ENCODE measurements at regions of chr2 and their contacts with region 1.

Region 1: GRCh38 chr2:150466741-150467620 is 20.5 kb downstream of the RND3 start:
- DNase-seq: peak; percentile 59
- H3K4me3 ChIP-seq: no peak overlapping the region
- H3K27ac ChIP-seq: peak overlapping the region; percentile 96
- H3K4me1 ChIP-seq: peaks cover 90% of the 10 kb centered on the region
- H3K27me3 ChIP-seq: no peaks in the 10 kb centered on the region
- CTCF ChIP-seq: no peak
- POLR2A ChIP-seq: peak; percentile 60

Region 2: DNA sequence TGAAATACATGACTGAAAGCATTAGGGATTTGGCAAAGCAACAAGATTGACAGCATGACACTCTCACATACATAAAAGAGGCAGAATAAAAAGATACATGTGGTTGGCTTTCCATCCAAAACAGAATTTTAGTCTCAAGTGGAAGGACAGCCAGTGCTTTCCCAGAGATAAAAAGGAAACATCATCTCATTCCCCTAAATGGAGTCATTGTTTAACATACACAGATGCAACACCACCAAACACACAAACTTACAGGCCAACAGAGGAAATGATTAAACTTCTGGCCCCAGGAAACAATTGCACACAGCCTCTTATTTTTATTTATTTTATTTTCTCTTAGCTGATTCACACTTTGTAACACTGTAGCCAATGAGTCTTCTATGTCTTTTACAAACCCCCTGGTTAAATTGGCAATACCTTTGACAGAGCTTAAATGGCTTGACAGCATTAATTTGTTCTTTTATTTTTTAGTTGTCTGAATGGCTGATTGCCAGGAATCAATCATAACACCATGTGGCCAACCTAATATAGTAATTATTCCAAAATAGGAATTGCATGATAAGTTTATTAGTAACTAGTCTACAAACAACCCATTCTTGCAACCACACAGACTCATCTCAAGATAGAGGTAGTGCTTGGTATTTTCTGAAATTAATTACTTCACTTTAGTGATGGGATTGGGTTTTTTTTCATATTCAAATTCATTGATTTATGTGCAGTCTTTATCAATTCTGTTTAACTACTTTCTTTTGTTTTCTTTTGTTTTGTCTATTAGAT is 170.0 kb before region 1 on chr2:
- CTCF ChIA-PET with region 1: no interaction called
- POLR2A ChIA-PET with region 1: no interaction called
- dilution Hi-C with region 1: no loop called
- intact Hi-C with region 1: loop called (anchors 5 kb)
- DNase-seq: peak; percentile 92
- H3K4me3 ChIP-seq: no peak overlapping the region
- H3K27ac ChIP-seq: peak overlapping the region; percentile 81
- H3K4me1 ChIP-seq: peaks cover 17% of the 10 kb centered on the region
- H3K27me3 ChIP-seq: no peaks in the 10 kb centered on the region
- CTCF ChIP-seq: no peak
- POLR2A ChIP-seq: no peak

Region 3: DNA sequence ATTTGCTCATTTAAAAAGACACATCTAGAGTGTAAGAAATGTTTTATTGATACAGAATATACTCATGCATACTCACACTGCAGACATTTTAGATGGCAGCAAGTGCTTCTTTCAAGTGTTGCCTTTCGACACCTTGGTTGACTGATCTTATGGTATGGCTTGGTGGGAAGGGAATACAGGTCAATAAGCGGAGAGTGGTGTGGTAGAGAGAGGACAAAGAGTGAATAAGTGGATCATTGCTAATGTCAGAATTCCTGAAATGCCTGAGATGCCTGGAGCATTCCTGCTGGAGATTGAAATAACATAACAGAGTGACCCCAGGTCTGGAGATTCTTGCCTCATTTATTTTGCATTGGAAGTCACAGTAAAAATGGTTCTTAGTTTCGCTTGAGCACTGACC is 56.2 kb before region 1 on chr2:
- CTCF ChIA-PET with region 1: interaction called, 3 read pairs
- POLR2A ChIA-PET with region 1: no interaction called
- dilution Hi-C with region 1: no loop called
- intact Hi-C with region 1: loop called (anchors 1 kb)
- DNase-seq: peak; percentile 85
- H3K4me3 ChIP-seq: no peak overlapping the region
- H3K27ac ChIP-seq: peak overlapping the region; percentile 95
- H3K4me1 ChIP-seq: peaks cover 40% of the 10 kb centered on the region
- H3K27me3 ChIP-seq: no peaks in the 10 kb centered on the region
- CTCF ChIP-seq: no peak
- POLR2A ChIP-seq: peak; percentile 39

Region 4: GRCh38 chr2:150478200-150478974 is 11.4 kb after region 1 on chr2:
- CTCF ChIA-PET with region 1: interaction called, 11 read pairs
- POLR2A ChIA-PET with region 1: interaction called, 9 read pairs
- dilution Hi-C with region 1: no loop called
- intact Hi-C with region 1: no loop called
- DNase-seq: peak; percentile 37
- H3K4me3 ChIP-seq: peak overlapping the region in 2 of 3 experiments; percentile 6 to 46
- H3K27ac ChIP-seq: peak overlapping the region; percentile 83
- H3K4me1 ChIP-seq: peaks cover 97% of the 10 kb centered on the region
- H3K27me3 ChIP-seq: no peaks in the 10 kb centered on the region
- CTCF ChIP-seq: no peak
- POLR2A ChIP-seq: peak; percentile 68

Region 5: DNA sequence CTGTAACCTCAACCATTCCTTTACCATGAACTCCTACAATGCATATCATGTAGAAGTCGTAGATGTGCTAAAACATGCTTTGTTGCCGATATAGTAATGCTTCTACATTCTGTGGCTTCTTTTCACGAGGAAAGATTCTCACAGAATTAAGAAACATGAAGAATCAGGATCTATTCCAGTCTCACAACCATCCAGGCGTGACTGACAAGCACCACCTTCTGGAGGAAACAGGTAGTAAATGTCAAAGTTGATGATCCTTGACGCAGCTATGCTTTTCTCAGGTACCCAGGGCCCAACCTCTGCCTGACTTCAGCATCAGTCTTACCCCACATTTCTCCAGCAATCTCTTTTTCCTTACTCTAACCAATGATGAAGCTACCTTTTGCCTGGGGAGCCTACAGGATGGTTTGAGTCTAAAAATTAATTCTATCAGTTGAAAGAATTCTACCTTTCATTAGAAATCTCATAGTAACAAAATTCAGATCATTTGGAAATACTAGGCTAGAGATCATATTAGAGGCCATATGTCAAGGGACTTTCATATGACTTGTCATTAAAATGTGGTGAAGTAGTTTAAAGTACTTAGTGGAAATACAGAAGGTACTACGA is 143.8 kb after region 1 on chr2:
- CTCF ChIA-PET with region 1: no interaction called
- POLR2A ChIA-PET with region 1: no interaction called
- dilution Hi-C with region 1: no loop called
- intact Hi-C with region 1: no loop called
- DNase-seq: peak; percentile 45
- H3K4me3 ChIP-seq: no peak overlapping the region
- H3K27ac ChIP-seq: no peak overlapping the region
- H3K4me1 ChIP-seq: peaks cover 8% of the 10 kb centered on the region
- H3K27me3 ChIP-seq: no peaks in the 10 kb centered on the region
- CTCF ChIP-seq: peak; percentile 31 to 34
- POLR2A ChIP-seq: no peak

Measured in endothelial cell of umbilical vein (primary cell).